ENCODE measurements at regions of chr9 and their contacts with region 1.

Region 1: DNA sequence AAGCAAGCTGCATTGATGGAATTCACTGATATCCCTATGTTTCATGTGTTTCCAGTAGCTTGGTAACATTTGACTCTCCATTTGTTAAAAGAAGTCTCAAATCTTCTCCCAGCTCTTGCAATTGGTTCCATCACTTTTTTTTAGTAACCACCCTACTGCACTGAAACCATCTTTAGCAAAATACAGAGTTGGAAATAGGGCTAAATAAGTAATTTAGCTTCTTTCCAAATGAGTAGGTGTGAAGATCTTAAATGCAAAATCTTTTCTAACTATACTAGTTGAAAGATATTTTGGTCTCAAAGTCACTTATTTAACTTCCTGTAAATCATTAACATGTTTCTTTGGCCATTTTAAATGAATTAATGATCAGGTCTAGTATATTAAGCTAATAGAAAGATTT is 138.1 kb downstream of the DIRAS2 start:
- DNase-seq: no peak
- H3K4me3 Mint-ChIP-seq: no peak overlapping the region
- H3K27ac Mint-ChIP-seq: no peak overlapping the region
- H3K4me1 Mint-ChIP-seq: peaks cover under 1% of the 10 kb centered on the region
- H3K27me3 Mint-ChIP-seq: peaks cover 2% of the 10 kb centered on the region

Region 2: DNA sequence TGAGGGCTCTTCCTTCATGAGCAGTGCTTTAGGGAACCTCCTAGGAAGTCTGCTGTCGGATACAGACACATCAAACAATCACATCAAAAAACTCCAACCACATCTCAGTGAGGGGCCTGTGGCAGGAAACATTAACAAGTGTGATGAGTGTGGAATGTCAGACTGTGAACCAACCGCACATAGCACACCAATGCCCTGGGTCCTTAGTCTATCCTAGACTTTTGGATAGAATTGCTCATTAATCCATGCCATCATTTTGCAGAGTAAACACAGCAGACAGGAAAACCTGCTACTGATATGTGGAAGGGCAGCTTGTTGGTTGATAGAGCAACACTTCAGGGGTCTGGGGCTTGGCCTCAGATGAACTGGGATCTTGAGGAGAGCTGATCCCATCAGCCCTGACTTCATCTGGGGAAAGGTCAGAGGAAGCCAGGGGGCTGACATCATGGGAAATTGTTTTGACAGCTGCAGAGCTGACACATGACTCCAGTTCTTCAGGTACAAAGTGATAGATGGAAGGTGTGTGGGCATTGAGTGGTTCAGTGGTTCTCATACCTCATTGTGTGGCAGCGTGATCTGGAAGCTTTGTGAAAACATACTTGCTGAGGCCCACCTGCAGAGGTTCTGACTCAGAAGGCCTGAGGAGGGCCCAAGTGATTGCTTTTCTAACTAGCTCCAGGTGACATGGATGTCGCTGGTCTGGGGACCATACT is 55.1 kb before region 1 on chr9:
- CTCF ChIA-PET with region 1: no interaction called
- POLR2A ChIA-PET with region 1: no interaction called
- intact Hi-C with region 1: no loop called
- DNase-seq: no peak
- H3K4me3 Mint-ChIP-seq: no peak overlapping the region
- H3K27ac Mint-ChIP-seq: no peak overlapping the region
- H3K4me1 Mint-ChIP-seq: no peaks in the 10 kb centered on the region
- H3K27me3 Mint-ChIP-seq: peaks cover 12% of the 10 kb centered on the region

Region 3: GRCh38 chr9:90489066-90489465 is 15.4 kb before region 1 on chr9:
- CTCF ChIA-PET with region 1: no interaction called
- POLR2A ChIA-PET with region 1: no interaction called
- intact Hi-C with region 1: loop called (anchors 2 kb)
- DNase-seq: no peak
- H3K4me3 Mint-ChIP-seq: no peak overlapping the region
- H3K27ac Mint-ChIP-seq: no peak overlapping the region
- H3K4me1 Mint-ChIP-seq: no peaks in the 10 kb centered on the region
- H3K27me3 Mint-ChIP-seq: peaks cover 7% of the 10 kb centered on the region

Measured in activated CD4-positive, alpha-beta memory T cell treated with anti-CD3 and anti-CD28 coated beads for 36 hours (primary cell).